Activated CD4-positive, alpha-beta memory T cell treated with anti-CD3 and anti-CD28 coated beads, Interleukin-2, amount 10 ng/mL, durations not matched to agents 7 days and 5 days (primary cell): ENCODE measurements at regions of chr1 and their contacts with region 1.

Region 1: DNA sequence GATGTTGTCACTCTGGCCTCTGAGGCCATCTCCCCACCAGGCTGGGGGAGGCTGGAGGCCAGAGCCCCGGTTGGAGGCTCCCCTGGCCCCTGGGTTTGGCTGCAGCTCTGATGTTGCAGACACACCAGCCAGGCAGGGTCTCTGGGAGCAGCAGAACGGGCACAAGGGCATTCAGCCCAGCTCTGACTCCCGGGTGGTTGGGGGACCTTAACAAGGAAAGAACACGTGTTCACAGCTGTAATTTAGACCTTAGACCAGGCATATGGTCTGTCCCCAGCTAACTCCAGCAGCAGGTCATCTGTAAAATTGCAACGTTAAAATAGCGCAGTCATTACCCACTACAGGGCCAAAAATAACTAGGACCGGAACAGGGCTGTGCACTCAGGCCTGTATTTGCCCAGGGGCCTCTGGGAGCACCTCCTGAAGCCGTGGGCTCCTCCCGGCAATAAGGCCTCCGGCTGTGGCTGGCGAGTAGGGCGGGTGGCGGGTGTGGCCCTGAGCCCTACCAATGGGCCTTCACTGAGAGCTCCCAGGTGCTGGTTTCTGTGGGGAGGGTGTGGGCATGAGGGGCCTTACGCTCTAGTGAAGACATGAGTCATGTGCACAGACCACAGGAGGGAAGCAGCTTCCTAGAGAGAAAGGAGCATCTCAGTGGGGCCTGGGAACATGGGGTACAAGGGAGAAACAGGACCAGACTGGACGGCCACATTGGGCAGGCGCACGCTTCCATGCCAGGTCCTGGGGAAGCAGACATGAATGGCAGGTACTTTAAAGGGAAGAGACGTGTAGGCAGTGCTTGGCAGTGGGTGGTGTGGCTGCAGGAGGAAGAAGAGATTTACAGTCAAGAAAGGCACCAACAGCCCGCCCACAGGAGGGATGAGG is 6.1 kb downstream of the LDLRAP1 start:
- DNase-seq: peak; percentile 90
- H3K4me3 Mint-ChIP-seq: peak overlapping the region; percentile 45
- H3K27ac Mint-ChIP-seq: peak overlapping the region; percentile 94
- H3K4me1 Mint-ChIP-seq: peaks cover 80% of the 10 kb centered on the region
- H3K27me3 Mint-ChIP-seq: peaks cover 1% of the 10 kb centered on the region

Region 2: GRCh38 chr1:25562101-25562927 is 12.8 kb after region 1 on chr1:
- CTCF ChIA-PET with region 1: interaction called, 14 read pairs
- POLR2A ChIA-PET with region 1: interaction called, 33 read pairs
- DNase-seq: peak; percentile 74
- H3K4me3 Mint-ChIP-seq: peak overlapping the region; percentile 37
- H3K27ac Mint-ChIP-seq: peak overlapping the region; percentile 83
- H3K4me1 Mint-ChIP-seq: peaks cover 75% of the 10 kb centered on the region
- H3K27me3 Mint-ChIP-seq: no peaks in the 10 kb centered on the region

Region 3: GRCh38 chr1:25572708-25573600 is 23.4 kb after region 1 on chr1:
- CTCF ChIA-PET with region 1: interaction called, 13 read pairs
- POLR2A ChIA-PET with region 1: interaction called, 4 read pairs
- DNase-seq: peak; percentile 51
- H3K4me3 Mint-ChIP-seq: no peak overlapping the region
- H3K27ac Mint-ChIP-seq: no peak overlapping the region
- H3K4me1 Mint-ChIP-seq: peaks cover 5% of the 10 kb centered on the region
- H3K27me3 Mint-ChIP-seq: peaks cover 1% of the 10 kb centered on the region